ENCODE measurements at regions of chr7 and their contacts with region 1.

Region 1: DNA sequence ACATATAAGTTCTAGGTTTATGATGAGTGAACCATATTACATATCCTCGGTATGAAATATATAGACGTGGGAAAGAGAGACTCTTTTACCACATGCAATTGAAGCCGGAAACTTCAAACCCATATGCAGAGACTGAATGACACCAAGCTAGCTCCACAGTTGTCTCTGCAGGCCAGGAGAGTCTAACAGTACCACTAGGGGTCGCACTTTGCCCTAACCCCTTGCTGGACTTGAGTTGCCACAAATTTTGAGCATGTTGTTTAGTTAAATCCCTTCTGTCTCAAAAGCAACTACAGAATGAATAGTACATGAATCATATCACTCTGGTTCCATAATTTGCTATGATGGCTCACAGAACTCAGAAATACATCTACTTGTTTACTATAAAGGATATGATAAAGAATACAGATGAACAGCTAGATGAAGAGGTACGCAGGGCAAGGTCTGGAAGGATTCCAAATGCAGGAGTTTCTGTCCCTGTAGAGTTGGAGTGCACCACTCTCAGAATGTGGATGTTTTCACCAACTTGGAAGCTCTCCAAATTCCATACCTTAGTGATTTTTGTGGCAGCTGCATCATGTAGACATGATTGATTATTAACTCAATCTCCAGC is 112.4 kb upstream of the YAE1 start:
- DNase-seq: peak; percentile 55
- H3K4me3 ChIP-seq: no peak overlapping the region
- H3K27ac ChIP-seq: no peak overlapping the region
- H3K4me1 ChIP-seq: peaks cover 0 to 5% of the 10 kb centered on the region in 2 experiments; a peak in 1 of 4 replicates
- H3K27me3 ChIP-seq: peaks cover 18% of the 10 kb centered on the region; the same call in 1 of the 2 replicates
- CTCF ChIP-seq: peak; percentile 95
- EP300 ChIP-seq: no peak
- RAD21 ChIP-seq: peak; percentile 59

Region 2: DNA sequence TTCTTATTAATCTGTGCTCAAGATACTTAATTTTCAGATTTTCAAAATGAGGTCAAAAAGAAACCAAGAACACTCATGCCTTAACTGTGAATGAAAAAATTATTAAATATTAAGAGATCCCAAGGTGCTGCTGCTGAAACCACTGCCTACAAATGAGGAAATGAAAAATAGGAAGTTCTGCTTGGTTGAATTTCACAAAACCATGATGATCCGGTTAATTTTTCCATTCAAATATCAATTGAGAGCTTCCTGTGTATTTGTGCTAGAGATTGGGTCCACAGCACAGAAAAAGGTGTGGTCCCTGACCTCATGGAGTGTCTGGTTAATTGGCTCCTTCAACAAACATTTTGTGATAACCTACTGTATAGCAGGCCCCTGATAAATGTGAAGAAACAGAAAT is 20.3 kb before region 1 on chr7:
- CTCF ChIA-PET with region 1: interaction called, 10 read pairs
- POLR2A ChIA-PET with region 1: no interaction called
- DNase-seq: no peak
- H3K4me3 ChIP-seq: no peak overlapping the region
- H3K27ac ChIP-seq: no peak overlapping the region
- H3K4me1 ChIP-seq: no peaks in the 10 kb centered on the region; a peak in 1 of 4 replicates
- H3K27me3 ChIP-seq: peaks cover 23% of the 10 kb centered on the region; the same call in 1 of the 2 replicates
- CTCF ChIP-seq: no peak
- EP300 ChIP-seq: no peak
- RAD21 ChIP-seq: no peak

Region 3: GRCh38 chr7:39465055-39465929 is 11.4 kb after region 1 on chr7:
- CTCF ChIA-PET with region 1: interaction called, 24 read pairs
- POLR2A ChIA-PET with region 1: no interaction called
- DNase-seq: peak; percentile 63
- H3K4me3 ChIP-seq: peak overlapping the region; percentile 21 to 28; a peak in 2 of 4 replicates
- H3K27ac ChIP-seq: no peak overlapping the region
- H3K4me1 ChIP-seq: no peaks in the 10 kb centered on the region; a peak in 1 of 4 replicates
- H3K27me3 ChIP-seq: no peaks in the 10 kb centered on the region; the same call in 1 of the 2 replicates
- CTCF ChIP-seq: peak; percentile 98
- EP300 ChIP-seq: no peak
- RAD21 ChIP-seq: peak; percentile 86